ENCODE measurements at regions of chr10 and their contacts with region 1.

Region 1: DNA sequence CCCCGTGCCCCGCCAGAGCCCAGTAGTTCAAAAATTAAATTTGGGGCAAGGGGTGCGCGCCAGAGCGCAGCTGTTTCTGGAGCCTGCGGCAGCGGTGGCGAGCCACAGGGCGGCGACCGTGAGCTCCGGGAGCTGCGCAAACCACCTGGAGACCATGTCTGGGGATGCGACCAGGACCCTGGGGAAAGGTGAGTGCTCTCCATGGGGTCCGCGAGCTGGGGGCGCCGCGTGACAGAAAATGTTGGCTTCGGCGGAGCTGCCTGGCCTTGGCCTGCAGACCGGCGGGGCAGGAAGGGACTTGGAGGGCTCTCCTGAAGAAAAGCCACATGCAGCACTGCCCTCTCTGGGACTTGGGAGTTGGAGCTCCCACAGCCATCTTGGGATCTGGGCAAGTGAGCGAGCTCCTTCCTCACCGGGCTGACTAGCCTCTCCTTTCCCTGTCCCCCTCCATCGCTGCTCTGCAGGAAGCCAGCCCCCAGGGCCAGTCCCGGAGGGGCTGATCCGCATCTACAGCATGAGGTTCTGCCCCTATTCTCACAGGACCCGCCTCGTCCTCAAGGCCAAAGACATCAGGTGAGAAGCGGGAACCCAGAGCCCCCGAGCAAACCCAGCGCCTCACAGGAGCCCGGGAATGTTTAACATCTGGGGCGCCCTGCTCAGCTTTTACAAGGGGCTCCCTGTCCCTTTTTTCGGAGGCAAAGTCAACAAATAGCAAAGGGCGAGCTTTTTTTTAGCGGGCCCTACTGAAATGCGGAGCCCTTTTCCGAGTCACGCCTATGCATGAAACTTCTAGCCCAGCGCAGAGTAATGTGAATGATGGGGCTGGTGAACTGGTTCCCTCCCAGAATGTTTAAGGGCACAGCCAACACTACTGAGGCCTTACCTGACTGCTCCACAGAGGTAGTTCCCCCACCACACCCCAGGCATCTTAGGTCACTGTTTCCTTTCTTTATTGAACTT is 6.1 kb downstream of the GSTO2 start:
- DNase-seq: peak; percentile 44
- H3K4me3 Mint-ChIP-seq: no peak overlapping the region
- H3K27ac Mint-ChIP-seq: no peak overlapping the region
- H3K4me1 Mint-ChIP-seq: peaks cover 3% of the 10 kb centered on the region
- H3K27me3 Mint-ChIP-seq: peaks cover 9% of the 10 kb centered on the region

Region 2: DNA sequence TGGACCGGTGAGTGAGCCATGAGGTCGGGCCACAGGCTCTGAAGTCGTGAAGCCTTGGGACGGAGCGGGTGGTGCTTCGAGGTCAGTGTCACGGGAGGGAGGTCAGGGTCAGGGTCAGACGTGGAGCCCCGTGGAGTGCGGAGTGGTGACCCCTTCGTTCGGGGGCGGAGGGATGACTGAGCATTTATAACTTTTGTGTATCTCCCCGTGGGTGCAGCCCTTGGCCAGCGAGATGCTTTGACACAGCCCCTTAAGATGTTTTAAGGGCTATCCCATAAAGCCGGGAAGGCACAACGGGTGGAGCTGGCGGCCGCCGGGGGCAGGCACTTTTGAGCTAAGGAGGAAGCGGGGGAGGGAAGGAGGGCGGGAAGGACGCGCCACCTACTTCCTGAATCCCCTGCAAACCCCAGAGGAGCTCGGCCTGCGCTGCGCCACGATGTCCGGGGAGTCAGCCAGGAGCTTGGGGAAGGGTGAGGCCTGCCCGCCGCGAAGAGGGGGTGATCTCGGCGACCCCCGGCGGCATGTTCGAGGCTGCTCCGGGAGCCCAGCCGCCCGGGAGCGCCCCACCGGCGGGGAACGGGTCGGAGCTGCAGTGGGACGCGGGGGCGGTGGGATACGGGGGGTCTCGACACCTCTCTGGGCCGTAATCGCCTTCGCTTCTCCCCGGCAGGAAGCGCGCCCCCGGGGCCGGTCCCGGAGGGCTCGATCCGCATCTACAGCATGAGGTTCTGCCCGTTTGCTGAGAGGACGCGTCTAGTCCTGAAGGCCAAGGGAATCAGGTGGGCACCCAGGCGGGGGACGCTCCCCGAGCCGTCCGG is 20.3 kb before region 1 on chr10 and contains the start of gene GSTO1:
- CTCF ChIA-PET with region 1: interaction called, 21 read pairs
- POLR2A ChIA-PET with region 1: no interaction called
- DNase-seq: peak; percentile 60
- H3K4me3 Mint-ChIP-seq: peak within 1 kb of the TSS; percentile 89
- H3K27ac Mint-ChIP-seq: peak within 1 kb of the TSS; percentile 96
- H3K4me1 Mint-ChIP-seq: peaks cover 48% of the 10 kb centered on the region
- H3K27me3 Mint-ChIP-seq: peaks cover 12% of the 10 kb centered on the region
- total RNA-seq, gene GSTO1: 129 to 139 TPM

Region 3: GRCh38 chr10:104264783-104265182 is 10.3 kb before region 1 on chr10:
- CTCF ChIA-PET with region 1: interaction called, 12 read pairs
- POLR2A ChIA-PET with region 1: no interaction called
- DNase-seq: no peak
- H3K4me3 Mint-ChIP-seq: no peak overlapping the region
- H3K27ac Mint-ChIP-seq: no peak overlapping the region
- H3K4me1 Mint-ChIP-seq: peaks cover 67% of the 10 kb centered on the region
- H3K27me3 Mint-ChIP-seq: no peaks in the 10 kb centered on the region

Region 4: GRCh38 chr10:104291439-104291951 is 16.5 kb after region 1 on chr10:
- CTCF ChIA-PET with region 1: interaction called, 82 read pairs
- POLR2A ChIA-PET with region 1: interaction called, 3 read pairs
- DNase-seq: peak; percentile 89
- H3K4me3 Mint-ChIP-seq: no peak overlapping the region
- H3K27ac Mint-ChIP-seq: no peak overlapping the region
- H3K4me1 Mint-ChIP-seq: peaks cover 14% of the 10 kb centered on the region
- H3K27me3 Mint-ChIP-seq: peaks cover 18% of the 10 kb centered on the region

Region 5: DNA sequence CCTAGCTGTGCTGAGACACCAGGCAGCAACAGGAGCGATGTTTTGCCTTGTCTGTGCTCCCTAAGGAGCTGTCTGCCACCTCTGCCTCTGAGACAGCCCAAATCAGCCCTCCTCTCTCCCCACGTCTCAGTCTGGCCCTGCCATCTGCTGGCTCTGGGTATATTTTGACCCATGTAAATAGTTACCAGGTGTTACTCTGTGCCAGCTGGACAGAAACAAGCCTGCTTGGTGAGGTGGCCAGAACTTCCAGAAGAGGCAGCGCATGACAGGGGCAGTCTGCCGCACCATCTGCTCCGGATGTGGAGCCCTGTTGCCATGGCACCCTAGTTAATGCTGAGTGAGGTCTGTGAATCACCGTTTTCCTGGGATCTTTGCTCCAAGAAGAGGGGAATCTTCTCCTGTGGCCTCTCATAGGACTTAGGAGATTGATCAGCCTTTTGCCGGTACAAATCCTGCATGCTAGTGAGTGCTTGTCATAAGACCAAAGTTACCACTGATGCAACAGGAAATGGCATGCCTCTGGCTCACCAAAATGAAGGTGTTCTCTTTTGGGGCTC is 25.8 kb after region 1 on chr10:
- CTCF ChIA-PET with region 1: interaction called, 15 read pairs
- POLR2A ChIA-PET with region 1: no interaction called
- DNase-seq: peak; percentile 45
- H3K4me3 Mint-ChIP-seq: no peak overlapping the region
- H3K27ac Mint-ChIP-seq: peak overlapping the region; percentile 84
- H3K4me1 Mint-ChIP-seq: peaks cover 43% of the 10 kb centered on the region
- H3K27me3 Mint-ChIP-seq: no peaks in the 10 kb centered on the region

Region 6: GRCh38 chr10:104345941-104346340 is 70.9 kb after region 1 on chr10:
- CTCF ChIA-PET with region 1: interaction called, 40 read pairs
- POLR2A ChIA-PET with region 1: no interaction called
- DNase-seq: no peak
- H3K4me3 Mint-ChIP-seq: no peak overlapping the region
- H3K27ac Mint-ChIP-seq: no peak overlapping the region
- H3K4me1 Mint-ChIP-seq: peaks cover 13% of the 10 kb centered on the region
- H3K27me3 Mint-ChIP-seq: no peaks in the 10 kb centered on the region

Region 7: GRCh38 chr10:104353325-104354048 is 78.4 kb after region 1 on chr10 and contains the start of gene CFAP58:
- CTCF ChIA-PET with region 1: interaction called, 40 read pairs
- POLR2A ChIA-PET with region 1: no interaction called
- DNase-seq: peak; percentile 92
- H3K4me3 Mint-ChIP-seq: peak within 1 kb of the TSS; percentile 34
- H3K27ac Mint-ChIP-seq: peak within 1 kb of the TSS; percentile 51
- H3K4me1 Mint-ChIP-seq: no peaks in the 10 kb centered on the region
- H3K27me3 Mint-ChIP-seq: no peaks in the 10 kb centered on the region
- total RNA-seq, gene CFAP58: 0.22 to 0.27 TPM